CD8-positive, alpha-beta T cell (primary cell): ENCODE measurements at regions of chr11 and their contacts with region 1.

Region 1: DNA sequence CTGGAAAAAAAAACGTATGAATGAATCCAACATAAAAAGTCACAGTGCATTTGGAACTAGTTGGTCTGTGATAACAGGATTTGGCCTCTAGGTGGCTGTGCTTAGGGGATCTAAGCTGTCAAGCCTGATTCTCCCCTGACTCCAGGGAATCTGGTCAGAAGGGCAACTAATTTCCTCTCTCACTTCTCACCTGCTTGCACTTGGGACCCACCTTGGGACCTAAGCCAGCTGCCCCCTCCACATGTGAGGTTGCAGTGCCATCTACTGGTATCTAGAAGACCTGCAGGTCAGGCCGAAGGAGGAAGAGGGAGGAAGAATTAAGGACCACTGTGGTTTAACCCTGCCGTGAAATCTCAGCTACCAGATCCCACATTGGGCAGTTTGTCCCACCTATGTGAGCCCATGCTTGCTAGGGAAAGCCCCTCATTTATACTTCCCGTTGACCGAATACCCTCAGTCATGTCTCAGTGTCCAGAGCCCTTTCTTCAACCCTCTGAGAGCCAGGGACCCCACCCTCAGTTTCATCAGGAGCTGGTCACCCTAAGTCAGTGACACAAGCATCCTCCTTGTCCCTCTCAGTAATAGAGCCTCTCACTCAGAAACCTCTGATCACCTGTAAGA is 33.2 kb upstream of the CAVIN3 start:
- DNase-seq: peak; percentile 26 to 73 (median 55)
- ATAC-seq: peak; percentile 75
- H3K4me3 ChIP-seq: no peak overlapping the region
- H3K4me3 Mint-ChIP-seq: no peak overlapping the region
- H3K27ac ChIP-seq: no peak overlapping the region
- H3K27ac Mint-ChIP-seq: no peak overlapping the region
- H3K4me1 ChIP-seq: no peaks in the 10 kb centered on the region
- H3K4me1 Mint-ChIP-seq: peaks cover 2% of the 10 kb centered on the region
- H3K27me3 ChIP-seq: no peaks in the 10 kb centered on the region
- H3K27me3 Mint-ChIP-seq: no peaks in the 10 kb centered on the region
- CTCF ChIP-seq: peak; percentile 92

Region 2: GRCh38 chr11:5123802-5124521 is 1229.5 kb before region 1 on chr11:
- CTCF ChIA-PET with region 1: no interaction called
- POLR2A ChIA-PET with region 1: no interaction called
- intact Hi-C with region 1: loop called in 1 of 2 experiments (anchors 2 kb)
- DNase-seq: peak in 7 of 9 experiments; percentile 17 to 55 (median 32)
- ATAC-seq: no peak
- H3K4me3 ChIP-seq: no peak overlapping the region
- H3K4me3 Mint-ChIP-seq: no peak overlapping the region
- H3K27ac ChIP-seq: no peak overlapping the region
- H3K27ac Mint-ChIP-seq: no peak overlapping the region
- H3K4me1 ChIP-seq: no peaks in the 10 kb centered on the region
- H3K4me1 Mint-ChIP-seq: no peaks in the 10 kb centered on the region
- H3K27me3 ChIP-seq: no peaks in the 10 kb centered on the region
- H3K27me3 Mint-ChIP-seq: peaks cover 5% of the 10 kb centered on the region
- CTCF ChIP-seq: peak; percentile 71

Region 3: GRCh38 chr11:6022956-6023355 is 330.5 kb before region 1 on chr11:
- CTCF ChIA-PET with region 1: interaction called, 18 read pairs
- POLR2A ChIA-PET with region 1: no interaction called
- intact Hi-C with region 1: loop called (anchors 1 kb)
- DNase-seq: peak in 2 of 9 experiments; percentile 60 to 66
- ATAC-seq: no peak
- H3K4me3 ChIP-seq: no peak overlapping the region
- H3K4me3 Mint-ChIP-seq: no peak overlapping the region
- H3K27ac ChIP-seq: no peak overlapping the region
- H3K27ac Mint-ChIP-seq: no peak overlapping the region
- H3K4me1 ChIP-seq: no peaks in the 10 kb centered on the region
- H3K4me1 Mint-ChIP-seq: no peaks in the 10 kb centered on the region
- H3K27me3 ChIP-seq: no peaks in the 10 kb centered on the region
- H3K27me3 Mint-ChIP-seq: peaks cover 18% of the 10 kb centered on the region
- CTCF ChIP-seq: peak; percentile 37

Region 4: GRCh38 chr11:6315811-6316425 is 37.6 kb before region 1 on chr11:
- CTCF ChIA-PET with region 1: interaction called, 34 read pairs
- POLR2A ChIA-PET with region 1: no interaction called
- intact Hi-C with region 1: no loop called
- DNase-seq: peak in 5 of 9 experiments; percentile 2 to 57 (median 27)
- ATAC-seq: peak; percentile 68
- H3K4me3 ChIP-seq: no peak overlapping the region
- H3K4me3 Mint-ChIP-seq: no peak overlapping the region
- H3K27ac ChIP-seq: no peak overlapping the region
- H3K27ac Mint-ChIP-seq: no peak overlapping the region
- H3K4me1 ChIP-seq: no peaks in the 10 kb centered on the region
- H3K4me1 Mint-ChIP-seq: peaks cover 7% of the 10 kb centered on the region
- H3K27me3 ChIP-seq: peaks cover 5 to 6% of the 10 kb centered on the region in 2 experiments
- H3K27me3 Mint-ChIP-seq: peaks cover 42% of the 10 kb centered on the region
- CTCF ChIP-seq: peak; percentile 58